GM12878 (cell line): ENCODE measurements at regions of chr9 and their contacts with region 1.

Region 1: GRCh38 chr9:99326112-99326916 is 104.2 kb downstream of the SEC61B start:
- DNase-seq: no peak
- ATAC-seq: peak; percentile 59
- H3K4me3 ChIP-seq: no peak overlapping the region
- H3K27ac ChIP-seq: no peak overlapping the region
- H3K4me1 ChIP-seq: no peaks in the 10 kb centered on the region
- H3K27me3 ChIP-seq: no peaks in the 10 kb centered on the region
- CTCF ChIP-seq: no peak
- EP300 ChIP-seq: no peak
- POLR2A ChIP-seq: no peak
- RAD21 ChIP-seq: no peak

Region 2: DNA sequence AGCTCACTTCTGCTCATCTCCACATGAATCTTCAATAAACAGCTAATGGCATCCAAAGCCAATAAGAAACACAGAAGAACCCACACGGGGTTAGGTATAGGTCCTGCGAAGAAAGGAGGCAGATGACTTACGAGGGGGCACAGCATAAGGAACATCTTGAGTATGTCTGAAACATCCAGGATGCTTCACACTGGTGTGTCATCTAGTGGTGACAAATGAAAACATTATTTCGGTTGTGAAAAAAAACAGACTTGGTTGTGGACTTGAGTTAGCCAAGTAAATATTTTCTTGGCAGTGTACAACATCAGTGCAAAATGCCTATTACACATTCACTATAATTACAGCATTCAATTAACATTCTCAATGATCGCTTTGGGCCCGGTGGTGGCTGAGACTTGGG is 16.0 kb after region 1 on chr9:
- CTCF ChIA-PET with region 1: interaction called, 3 read pairs
- POLR2A ChIA-PET with region 1: no interaction called
- RAD21 ChIA-PET with region 1: no interaction called
- SMC1A ChIA-PET with region 1: interaction called, 3 read pairs
- in situ Hi-C with region 1: no loop called
- intact Hi-C with region 1: loop called (anchors 2 kb)
- DNase-seq: no peak
- ATAC-seq: no peak
- H3K4me3 ChIP-seq: no peak overlapping the region
- H3K27ac ChIP-seq: no peak overlapping the region
- H3K4me1 ChIP-seq: no peaks in the 10 kb centered on the region
- H3K27me3 ChIP-seq: no peaks in the 10 kb centered on the region
- CTCF ChIP-seq: peak in 1 of 3 experiments; percentile 5; a peak in 1 of 6 replicates
- EP300 ChIP-seq: no peak
- POLR2A ChIP-seq: no peak
- RAD21 ChIP-seq: 0 out of 2 replicates have a peak, but pooled peaks have one; percentile 33

Region 3: DNA sequence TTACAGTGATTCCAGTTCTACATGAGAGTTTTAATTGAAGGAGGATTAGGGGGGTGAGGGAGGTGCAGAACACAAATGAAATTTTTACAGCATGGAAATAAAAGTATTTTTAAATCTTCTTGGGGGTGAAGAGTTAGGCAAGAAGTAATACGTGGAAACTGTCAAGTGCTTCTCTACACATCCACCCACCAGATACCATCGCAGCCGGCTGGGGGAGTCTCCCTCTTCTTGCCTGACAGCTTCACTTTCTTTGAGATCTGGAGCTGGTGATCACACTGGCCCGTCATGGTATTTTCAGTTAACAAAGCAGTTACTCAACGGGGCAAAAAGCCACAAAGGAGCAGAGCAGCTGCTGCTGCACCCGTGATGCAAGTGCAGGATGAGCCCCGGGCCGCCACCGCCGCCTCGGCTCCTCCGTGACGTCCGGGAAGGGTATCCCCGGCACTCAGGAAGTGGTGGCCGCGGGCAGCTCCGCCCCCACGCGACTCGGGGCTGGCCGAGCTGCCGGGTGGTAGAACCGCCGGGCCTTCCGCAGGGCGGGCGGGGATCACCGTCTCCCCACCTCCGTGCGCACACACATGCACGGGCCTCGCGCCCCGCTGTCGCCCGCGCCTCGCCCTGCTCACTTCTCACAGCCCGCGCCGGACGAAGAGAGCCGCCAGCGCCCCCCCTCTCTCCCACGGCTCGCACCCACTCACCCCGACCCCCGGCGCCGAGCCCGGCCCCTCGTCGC is 493.0 kb after region 1 on chr9:
- CTCF ChIA-PET with region 1: no interaction called
- POLR2A ChIA-PET with region 1: no interaction called
- RAD21 ChIA-PET with region 1: no interaction called
- SMC1A ChIA-PET with region 1: no interaction called
- in situ Hi-C with region 1: no loop called
- intact Hi-C with region 1: no loop called
- DNase-seq: peak; percentile 63
- ATAC-seq: peak; percentile 66
- H3K4me3 ChIP-seq: peak overlapping the region; percentile 77
- H3K27ac ChIP-seq: peak overlapping the region; percentile 92
- H3K4me1 ChIP-seq: peaks cover 9% of the 10 kb centered on the region
- H3K27me3 ChIP-seq: no peaks in the 10 kb centered on the region
- CTCF ChIP-seq: no peak
- EP300 ChIP-seq: peak; percentile 94
- POLR2A ChIP-seq: peak; percentile 99
- RAD21 ChIP-seq: no peak